Activated naive CD4-positive, alpha-beta T cell treated with anti-CD3 and anti-CD28 coated beads, Interleukin-2, amount 10 ng/mL, durations not matched to agents 7 days and 5 days (primary cell): ENCODE measurements at regions of chr12 and their contacts with region 1.

Region 1: GRCh38 chr12:121443193-121443870 is 43.4 kb downstream of the RNF34 start:
- DNase-seq: peak; percentile 71
- H3K4me3 Mint-ChIP-seq: no peak overlapping the region
- H3K27ac Mint-ChIP-seq: peak overlapping the region; percentile 70
- H3K4me1 Mint-ChIP-seq: no peaks in the 10 kb centered on the region
- H3K27me3 Mint-ChIP-seq: no peaks in the 10 kb centered on the region

Region 2: GRCh38 chr12:121334513-121335343 is 108.6 kb before region 1 on chr12:
- CTCF ChIA-PET with region 1: interaction called, 69 read pairs
- DNase-seq: no peak
- H3K4me3 Mint-ChIP-seq: no peak overlapping the region
- H3K27ac Mint-ChIP-seq: no peak overlapping the region
- H3K4me1 Mint-ChIP-seq: peaks cover 3% of the 10 kb centered on the region
- H3K27me3 Mint-ChIP-seq: no peaks in the 10 kb centered on the region

Region 3: GRCh38 chr12:121376754-121377697 is 66.3 kb before region 1 on chr12:
- CTCF ChIA-PET with region 1: no interaction called
- DNase-seq: no peak
- H3K4me3 Mint-ChIP-seq: no peak overlapping the region
- H3K27ac Mint-ChIP-seq: no peak overlapping the region
- H3K4me1 Mint-ChIP-seq: no peaks in the 10 kb centered on the region
- H3K27me3 Mint-ChIP-seq: peaks cover 13% of the 10 kb centered on the region

Region 4: GRCh38 chr12:121399391-121400331 is 43.7 kb before region 1 on chr12 and contains the start of gene RNF34:
- CTCF ChIA-PET with region 1: interaction called, 15 read pairs
- DNase-seq: peak; percentile 99
- H3K4me3 Mint-ChIP-seq: peak within 1 kb of the TSS; percentile 84
- H3K27ac Mint-ChIP-seq: peak within 1 kb of the TSS; percentile 94
- H3K4me1 Mint-ChIP-seq: peaks cover 41% of the 10 kb centered on the region
- H3K27me3 Mint-ChIP-seq: no peaks in the 10 kb centered on the region

Region 5: GRCh38 chr12:121432740-121433480 is 10.4 kb before region 1 on chr12:
- CTCF ChIA-PET with region 1: interaction called, 33 read pairs
- DNase-seq: no peak
- H3K4me3 Mint-ChIP-seq: no peak overlapping the region
- H3K27ac Mint-ChIP-seq: peak overlapping the region; percentile 4
- H3K4me1 Mint-ChIP-seq: no peaks in the 10 kb centered on the region
- H3K27me3 Mint-ChIP-seq: no peaks in the 10 kb centered on the region

Region 6: GRCh38 chr12:121461048-121461447 is 17.7 kb after region 1 on chr12:
- CTCF ChIA-PET with region 1: interaction called, 14 read pairs
- DNase-seq: no peak
- H3K4me3 Mint-ChIP-seq: no peak overlapping the region
- H3K27ac Mint-ChIP-seq: no peak overlapping the region
- H3K4me1 Mint-ChIP-seq: peaks cover 47% of the 10 kb centered on the region
- H3K27me3 Mint-ChIP-seq: no peaks in the 10 kb centered on the region